Posterior vena cava (tissue), 2 donors: ENCODE measurements at regions of chr11 and their contacts with region 1.

Region 1: GRCh38 chr11:127345819-127346459 is 345.4 kb upstream of the KIRREL3 start:
- DNase-seq: no peak

Region 2: GRCh38 chr11:126607374-126607773 is 738.6 kb before region 1 on chr11:
- intact Hi-C with region 1: loop called in 1 of 2 experiments (anchors 5 kb)
- DNase-seq: no peak

Region 3: DNA sequence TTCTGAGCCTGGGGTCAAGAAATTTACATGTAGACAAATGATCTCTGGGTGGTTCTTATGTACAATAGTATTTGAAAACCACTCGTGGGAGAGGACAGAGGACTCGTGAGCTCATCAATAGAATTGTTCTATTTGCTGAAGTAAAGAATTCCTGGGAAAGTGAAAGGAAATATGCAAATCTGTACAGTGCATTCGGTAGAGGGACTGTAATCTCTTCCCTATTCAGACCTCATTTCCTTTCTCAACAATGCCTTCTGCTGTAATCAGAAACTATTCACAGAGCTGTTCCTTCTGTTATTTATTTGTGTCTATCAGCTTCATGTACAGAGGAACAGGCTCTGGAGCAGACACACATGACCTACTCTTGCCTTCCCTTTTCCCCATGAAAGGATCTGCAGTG is 364.0 kb after region 1 on chr11:
- intact Hi-C with region 1: no loop called
- DNase-seq: no peak